Activated CD4-positive, alpha-beta memory T cell treated with anti-CD3 and anti-CD28 coated beads for 36 hours (primary cell): ENCODE measurements at regions of chr4 and their contacts with region 1.

Region 1: DNA sequence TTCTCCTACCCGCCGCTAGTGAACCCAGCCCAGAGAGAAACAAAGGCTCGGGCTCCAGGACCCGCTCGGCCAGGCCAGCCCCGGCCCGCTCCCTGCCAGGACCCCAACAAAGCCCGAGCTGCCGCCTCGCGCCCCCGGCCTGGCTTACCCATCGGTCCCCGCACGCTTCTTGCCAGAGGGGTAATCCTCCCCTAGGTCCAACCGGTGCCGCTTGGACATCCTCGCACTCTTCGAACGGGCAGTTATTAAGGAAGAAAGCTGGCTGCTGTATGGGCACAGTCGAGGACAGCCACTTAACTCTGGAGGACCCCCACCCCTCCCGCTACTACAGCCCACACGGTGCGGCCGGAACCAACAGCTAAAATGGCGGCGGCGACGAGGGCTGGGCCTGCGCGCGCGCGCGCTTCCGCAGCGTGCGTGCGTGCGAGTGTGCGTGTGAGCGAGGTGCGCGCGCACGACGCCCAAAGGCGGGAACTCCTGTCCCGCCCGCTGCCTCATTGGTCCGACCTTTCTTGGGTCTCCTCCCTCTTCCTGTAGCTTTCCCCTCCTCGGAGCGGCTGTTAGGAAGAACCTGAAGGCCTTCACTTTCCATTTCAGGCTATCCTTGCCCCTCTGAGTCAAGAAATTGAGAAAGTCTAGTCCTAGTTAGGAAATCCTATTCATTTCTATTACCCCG is at the start of gene DHX15:
- DNase-seq: peak; percentile 95
- H3K4me3 Mint-ChIP-seq: peak within 1 kb of the TSS; percentile 94
- H3K27ac Mint-ChIP-seq: peak within 1 kb of the TSS; percentile 95
- H3K4me1 Mint-ChIP-seq: peaks cover 32% of the 10 kb centered on the region
- H3K27me3 Mint-ChIP-seq: peaks cover 3% of the 10 kb centered on the region
- total RNA-seq, gene DHX15: 169 to 172 TPM

Region 2: DNA sequence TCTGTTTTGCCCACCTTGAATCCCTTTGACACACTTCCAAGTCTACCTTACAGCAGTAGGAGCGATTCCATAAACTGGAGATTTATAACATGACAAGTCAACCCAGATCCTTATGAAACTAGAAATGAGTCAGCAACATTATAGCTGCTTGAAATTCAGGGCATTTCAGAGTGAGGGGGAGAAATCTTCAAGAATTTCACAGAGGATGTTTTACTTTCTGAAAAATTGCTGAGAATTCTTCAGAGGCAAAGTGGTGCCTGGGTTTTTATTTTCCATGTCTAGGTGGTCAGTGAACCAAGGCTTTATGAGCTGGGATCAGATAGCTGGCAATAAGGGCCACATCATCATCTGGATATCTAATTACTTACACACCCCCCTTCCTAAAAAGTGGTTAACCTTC is 814.3 kb before region 1 on chr4:
- CTCF ChIA-PET with region 1: no interaction called
- POLR2A ChIA-PET with region 1: no interaction called
- intact Hi-C with region 1: no loop called
- DNase-seq: no peak
- H3K4me3 Mint-ChIP-seq: no peak overlapping the region
- H3K27ac Mint-ChIP-seq: no peak overlapping the region
- H3K4me1 Mint-ChIP-seq: no peaks in the 10 kb centered on the region
- H3K27me3 Mint-ChIP-seq: no peaks in the 10 kb centered on the region

Region 3: GRCh38 chr4:24472514-24473308 is 111.6 kb before region 1 on chr4:
- CTCF ChIA-PET with region 1: no interaction called
- POLR2A ChIA-PET with region 1: interaction called, 4 read pairs
- intact Hi-C with region 1: loop called (anchors 2 kb)
- DNase-seq: peak; percentile 73
- H3K4me3 Mint-ChIP-seq: peak overlapping the region; percentile 79
- H3K27ac Mint-ChIP-seq: no peak overlapping the region
- H3K4me1 Mint-ChIP-seq: peaks cover 25% of the 10 kb centered on the region
- H3K27me3 Mint-ChIP-seq: peaks cover 47% of the 10 kb centered on the region

Region 4: GRCh38 chr4:24551492-24552289 is 32.6 kb before region 1 on chr4:
- CTCF ChIA-PET with region 1: interaction called, 4 read pairs
- POLR2A ChIA-PET with region 1: no interaction called
- intact Hi-C with region 1: loop called (anchors 2 kb)
- DNase-seq: no peak
- H3K4me3 Mint-ChIP-seq: no peak overlapping the region
- H3K27ac Mint-ChIP-seq: no peak overlapping the region
- H3K4me1 Mint-ChIP-seq: peaks cover 56% of the 10 kb centered on the region
- H3K27me3 Mint-ChIP-seq: no peaks in the 10 kb centered on the region

Region 5: DNA sequence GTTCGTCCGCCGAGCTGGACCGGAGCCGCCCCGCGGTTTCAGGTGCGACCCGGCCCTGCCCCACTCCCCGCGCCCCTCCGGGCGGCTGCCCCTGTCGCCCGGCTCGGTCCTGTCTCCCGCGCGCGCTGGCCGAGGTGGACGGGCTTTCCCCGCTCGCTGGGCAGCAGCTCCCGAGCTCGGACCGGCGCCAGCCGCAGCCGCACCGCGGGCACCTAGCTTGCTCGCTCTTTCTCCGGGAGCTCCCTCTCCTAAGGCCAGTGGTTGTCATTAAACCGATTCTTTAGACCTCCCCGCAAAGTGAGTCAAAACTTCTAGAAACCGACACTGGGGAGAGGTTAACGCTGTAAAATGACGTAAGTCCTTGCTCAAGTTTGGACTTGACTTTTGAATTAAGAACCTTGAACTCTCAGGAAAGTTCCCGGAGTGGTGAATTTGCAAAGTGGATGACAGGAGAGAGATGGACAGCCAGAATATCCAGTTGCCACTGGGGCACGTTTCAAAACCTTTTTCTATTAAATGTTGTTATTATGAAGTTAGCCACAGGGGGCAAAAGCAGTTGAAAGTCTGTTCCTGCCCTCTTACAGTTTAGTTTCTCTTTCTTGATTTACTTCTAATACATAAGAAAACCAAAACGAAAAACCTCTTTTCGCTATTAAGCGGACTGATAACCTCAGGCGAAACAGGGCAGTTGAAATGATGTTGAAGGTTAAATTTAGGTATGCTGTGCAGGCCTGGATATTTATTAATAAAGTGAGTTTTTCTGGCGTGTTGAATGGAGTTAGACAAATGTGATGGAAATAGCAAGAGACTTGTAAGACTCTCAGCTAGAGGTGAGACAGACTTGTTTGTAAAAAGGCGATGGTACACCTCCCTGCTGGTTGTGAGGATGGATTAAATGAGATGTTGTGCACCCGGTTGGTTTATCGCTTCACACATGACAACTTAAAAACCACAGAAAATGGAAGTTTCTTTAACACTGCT is 650.4 kb after region 1 on chr4:
- CTCF ChIA-PET with region 1: no interaction called
- POLR2A ChIA-PET with region 1: no interaction called
- intact Hi-C with region 1: loop called (anchors 2 kb)
- DNase-seq: peak; percentile 59
- H3K4me3 Mint-ChIP-seq: peak overlapping the region; percentile 93
- H3K27ac Mint-ChIP-seq: peak overlapping the region; percentile 94
- H3K4me1 Mint-ChIP-seq: peaks cover 51% of the 10 kb centered on the region
- H3K27me3 Mint-ChIP-seq: no peaks in the 10 kb centered on the region